ENCODE measurements at regions of chr1 and their contacts with region 1.

Region 1: GRCh38 chr1:67214420-67215174 is 48.3 kb downstream of the IL23R start:
- DNase-seq: no peak
- H3K4me3 ChIP-seq: no peak overlapping the region
- H3K27ac ChIP-seq: no peak overlapping the region
- H3K4me1 ChIP-seq: peaks cover 0 to 2% (median 0%) of the 10 kb centered on the region in 4 experiments; a peak in 1 of 7 replicates
- H3K27me3 ChIP-seq: no peaks in the 10 kb centered on the region
- CTCF ChIP-seq: peak in 2 of 3 experiments; percentile 64 to 69; a peak in 3 of 4 replicates
- EP300 ChIP-seq: no peak
- POLR2A ChIP-seq: no peak
- RAD21 ChIP-seq: peak; percentile 37 to 61

Region 2: GRCh38 chr1:66876664-66877063 is 337.9 kb before region 1 on chr1:
- CTCF ChIA-PET with region 1: no interaction called
- POLR2A ChIA-PET with region 1: no interaction called
- DNase-seq: no peak
- H3K4me3 ChIP-seq: no peak overlapping the region
- H3K27ac ChIP-seq: no peak overlapping the region
- H3K4me1 ChIP-seq: no peaks in the 10 kb centered on the region
- H3K27me3 ChIP-seq: no peaks in the 10 kb centered on the region
- CTCF ChIP-seq: peak in 1 of 3 experiments; percentile 1; a peak in 1 of 4 replicates
- EP300 ChIP-seq: no peak
- POLR2A ChIP-seq: no peak
- RAD21 ChIP-seq: peak; percentile 18 to 45; a peak in 2 of 4 replicates

Region 3: DNA sequence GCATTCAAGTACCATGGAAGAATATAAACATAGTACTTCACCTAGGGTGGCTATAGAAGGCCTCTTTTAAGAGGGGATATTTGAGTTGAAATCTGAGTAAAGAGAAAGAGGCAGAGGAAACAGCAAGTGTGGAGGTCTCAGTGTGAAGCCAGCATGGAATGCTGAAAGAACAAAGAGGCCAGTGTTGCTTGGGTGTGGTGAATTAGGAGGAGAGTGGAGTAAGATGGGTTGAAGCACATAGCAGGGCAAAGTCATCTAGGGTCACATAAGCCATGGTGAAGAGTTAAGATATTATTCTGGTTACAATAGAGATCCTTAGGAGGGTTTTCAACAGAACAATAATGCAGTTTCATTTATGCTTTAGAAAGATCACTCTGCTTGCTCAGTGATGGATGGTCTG is 117.3 kb before region 1 on chr1:
- CTCF ChIA-PET with region 1: no interaction called
- POLR2A ChIA-PET with region 1: no interaction called
- DNase-seq: peak in 1 of 2 experiments; percentile 13
- H3K4me3 ChIP-seq: no peak overlapping the region; a peak in 1 of 8 replicates
- H3K27ac ChIP-seq: no peak overlapping the region
- H3K4me1 ChIP-seq: peaks cover 1 to 10% (median 7%) of the 10 kb centered on the region in 4 experiments; a peak in 6 of 7 replicates
- H3K27me3 ChIP-seq: no peaks in the 10 kb centered on the region
- CTCF ChIP-seq: no peak
- EP300 ChIP-seq: no peak
- POLR2A ChIP-seq: no peak
- RAD21 ChIP-seq: no peak

Region 4: GRCh38 chr1:67134695-67135094 is 79.9 kb before region 1 on chr1 and contains the start of gene C1orf141:
- CTCF ChIA-PET with region 1: interaction called, 20 read pairs
- POLR2A ChIA-PET with region 1: interaction called, 3 read pairs
- DNase-seq: peak in 1 of 2 experiments; percentile 53
- H3K4me3 ChIP-seq: peak within 1 kb of the TSS; percentile 39 to 56 (median 49); a peak in 7 of 8 replicates
- H3K27ac ChIP-seq: no peak within 1 kb of the TSS
- H3K4me1 ChIP-seq: peaks cover 2 to 7% (median 4%) of the 10 kb centered on the region in 4 experiments; a peak in 4 of 7 replicates
- H3K27me3 ChIP-seq: 0 out of 7 replicates have a peak, but pooled peaks cover 0 to 2% (median 0%) of the 10 kb centered on the region in 4 experiments
- CTCF ChIP-seq: no peak
- EP300 ChIP-seq: no peak
- POLR2A ChIP-seq: no peak
- RAD21 ChIP-seq: no peak
- total RNA-seq, gene C1orf141: not detected in 2 replicates

Region 5: DNA sequence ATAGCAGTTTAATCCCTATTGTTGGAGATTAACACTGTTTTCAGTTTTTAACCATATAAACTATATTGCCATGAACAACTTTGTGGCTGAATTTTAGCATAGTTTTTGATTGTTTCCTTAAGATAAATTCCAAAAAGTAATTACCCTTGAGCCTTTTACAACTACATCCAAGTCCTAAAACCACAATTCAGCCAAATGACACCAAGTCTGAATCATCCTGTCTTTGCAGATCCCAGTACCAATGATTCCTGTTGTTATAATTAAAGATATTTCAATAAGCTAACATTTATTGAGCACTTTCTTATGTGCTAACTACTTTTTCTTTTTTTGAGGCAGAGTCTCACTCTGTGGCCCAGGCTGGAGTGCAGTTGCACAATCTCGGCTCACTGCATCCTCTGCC is 12.7 kb before region 1 on chr1:
- CTCF ChIA-PET with region 1: interaction called, 59 read pairs
- POLR2A ChIA-PET with region 1: no interaction called
- DNase-seq: no peak
- H3K4me3 ChIP-seq: no peak overlapping the region
- H3K27ac ChIP-seq: no peak overlapping the region
- H3K4me1 ChIP-seq: no peaks in the 10 kb centered on the region
- H3K27me3 ChIP-seq: no peaks in the 10 kb centered on the region
- CTCF ChIP-seq: no peak
- EP300 ChIP-seq: no peak
- POLR2A ChIP-seq: no peak
- RAD21 ChIP-seq: no peak

Region 6: DNA sequence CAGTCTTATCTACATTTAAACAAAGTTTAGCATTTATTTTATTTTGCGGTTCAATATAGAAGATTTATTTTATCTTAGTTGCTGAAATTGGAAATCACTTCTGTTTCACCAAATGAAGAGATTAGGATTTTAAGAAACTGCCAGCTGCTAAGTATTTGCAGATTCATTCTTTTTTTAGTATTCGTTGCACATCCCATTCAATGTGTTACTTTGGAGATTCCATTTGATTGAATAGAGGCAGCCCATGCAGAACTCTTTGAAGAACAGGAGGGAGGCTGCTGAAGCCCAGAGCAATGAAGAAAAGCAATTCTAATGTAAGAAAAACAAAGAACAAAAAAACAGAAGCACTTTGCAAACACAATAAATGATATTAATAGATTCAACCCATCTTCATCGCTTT is 54.5 kb after region 1 on chr1:
- CTCF ChIA-PET with region 1: interaction called, 11 read pairs
- POLR2A ChIA-PET with region 1: no interaction called
- DNase-seq: no peak
- H3K4me3 ChIP-seq: no peak overlapping the region
- H3K27ac ChIP-seq: no peak overlapping the region
- H3K4me1 ChIP-seq: no peaks in the 10 kb centered on the region
- H3K27me3 ChIP-seq: no peaks in the 10 kb centered on the region
- CTCF ChIP-seq: no peak
- EP300 ChIP-seq: no peak
- POLR2A ChIP-seq: no peak
- RAD21 ChIP-seq: no peak

Region 7: GRCh38 chr1:67339623-67340343 is 125.2 kb after region 1 on chr1:
- CTCF ChIA-PET with region 1: interaction called, 68 read pairs
- POLR2A ChIA-PET with region 1: no interaction called
- DNase-seq: no peak
- H3K4me3 ChIP-seq: no peak overlapping the region
- H3K27ac ChIP-seq: no peak overlapping the region
- H3K4me1 ChIP-seq: peaks cover 4 to 9% (median 8%) of the 10 kb centered on the region in 4 experiments; a peak in 5 of 7 replicates
- H3K27me3 ChIP-seq: no peaks in the 10 kb centered on the region; a peak in 2 of 7 replicates
- CTCF ChIP-seq: no peak
- EP300 ChIP-seq: no peak
- POLR2A ChIP-seq: no peak
- RAD21 ChIP-seq: no peak

Region 8: GRCh38 chr1:67524143-67525052 is 309.8 kb after region 1 on chr1:
- CTCF ChIA-PET with region 1: interaction called, 37 read pairs
- POLR2A ChIA-PET with region 1: no interaction called
- DNase-seq: no peak
- H3K4me3 ChIP-seq: no peak overlapping the region
- H3K27ac ChIP-seq: no peak overlapping the region
- H3K4me1 ChIP-seq: no peaks in the 10 kb centered on the region
- H3K27me3 ChIP-seq: peaks cover 14 to 36% (median 22%) of the 10 kb centered on the region in 4 experiments
- CTCF ChIP-seq: peak in 2 of 3 experiments; percentile 5 to 48; a peak in 2 of 4 replicates
- EP300 ChIP-seq: no peak
- POLR2A ChIP-seq: no peak
- RAD21 ChIP-seq: peak in 1 of 2 experiments; percentile 32; a peak in 1 of 4 replicates